Activated CD8-positive, alpha-beta T cell treated with anti-CD3 and anti-CD28 coated beads for 36 hours (primary cell): ENCODE measurements at regions of chr19 and their contacts with region 1.

Region 1: DNA sequence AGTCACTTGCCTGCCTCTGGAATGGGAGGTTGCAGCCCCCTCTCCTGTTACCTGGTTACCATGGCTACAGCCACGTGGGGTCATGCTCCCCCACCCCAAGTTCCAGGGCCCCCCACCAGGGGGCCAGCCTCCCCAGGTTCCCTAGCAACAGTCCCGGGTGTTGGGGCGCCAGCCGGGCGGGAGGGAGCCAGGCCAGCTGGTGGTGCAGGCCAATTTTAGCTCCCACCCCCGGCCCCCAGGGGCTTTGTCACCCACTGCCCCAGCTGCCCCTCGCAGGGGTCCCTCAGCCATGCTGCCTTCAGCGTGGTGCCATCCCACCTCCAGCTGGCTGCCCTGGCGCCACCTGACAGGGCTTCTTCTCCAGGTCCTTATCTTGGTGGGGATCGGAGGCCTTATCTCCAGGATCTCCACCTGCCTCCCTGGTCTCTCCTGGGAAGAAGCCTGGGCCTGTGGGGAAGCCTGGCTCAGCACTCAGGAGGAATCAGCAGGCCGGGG is 3.0 kb downstream of the MARK4 start:
- DNase-seq: peak; percentile 10
- ATAC-seq: no peak
- H3K4me3 Mint-ChIP-seq: no peak overlapping the region
- H3K27ac Mint-ChIP-seq: peak overlapping the region; percentile 42
- H3K4me1 Mint-ChIP-seq: peaks cover 30% of the 10 kb centered on the region
- H3K27me3 Mint-ChIP-seq: no peaks in the 10 kb centered on the region
- CTCF ChIP-seq: no peak

Region 2: GRCh38 chr19:45340232-45340898 is 86.3 kb after region 1 on chr19 and contains the start of gene KLC3:
- CTCF ChIA-PET with region 1: interaction called, 12 read pairs
- POLR2A ChIA-PET with region 1: interaction called, 3 read pairs
- intact Hi-C with region 1: no loop called
- DNase-seq: peak; percentile 37
- ATAC-seq: peak; percentile 46
- H3K4me3 Mint-ChIP-seq: no peak within 1 kb of the TSS
- H3K27ac Mint-ChIP-seq: no peak within 1 kb of the TSS
- H3K4me1 Mint-ChIP-seq: peaks cover 7% of the 10 kb centered on the region
- H3K27me3 Mint-ChIP-seq: peaks cover 20% of the 10 kb centered on the region
- CTCF ChIP-seq: no peak
- total RNA-seq, gene KLC3: not detected

Region 3: GRCh38 chr19:45423589-45424190 is 169.6 kb after region 1 on chr19 and contains the start of gene ERCC1:
- CTCF ChIA-PET with region 1: no interaction called
- POLR2A ChIA-PET with region 1: no interaction called
- intact Hi-C with region 1: no loop called
- DNase-seq: peak; percentile 89
- ATAC-seq: peak; percentile 74
- H3K4me3 Mint-ChIP-seq: peak within 1 kb of the TSS; percentile 89
- H3K27ac Mint-ChIP-seq: peak within 1 kb of the TSS; percentile 89
- H3K4me1 Mint-ChIP-seq: peaks cover 58% of the 10 kb centered on the region
- H3K27me3 Mint-ChIP-seq: no peaks in the 10 kb centered on the region
- CTCF ChIP-seq: no peak
- total RNA-seq, gene ERCC1: 41.6 to 46.5 TPM